OCI-LY7 (cell line): ENCODE measurements at regions of chr13 and their contacts with region 1.

Region 1: GRCh38 chr13:74133657-74134201 is 475 bp downstream of the KLF12 start:
- DNase-seq: peak; percentile 95
- H3K4me3 ChIP-seq: peak overlapping the region; percentile 86
- H3K27ac ChIP-seq: peak overlapping the region; percentile 90
- H3K4me1 ChIP-seq: peaks cover 38% of the 10 kb centered on the region
- CTCF ChIP-seq: 0 out of 2 replicates have a peak, but pooled peaks have one; percentile 14

Region 2: DNA sequence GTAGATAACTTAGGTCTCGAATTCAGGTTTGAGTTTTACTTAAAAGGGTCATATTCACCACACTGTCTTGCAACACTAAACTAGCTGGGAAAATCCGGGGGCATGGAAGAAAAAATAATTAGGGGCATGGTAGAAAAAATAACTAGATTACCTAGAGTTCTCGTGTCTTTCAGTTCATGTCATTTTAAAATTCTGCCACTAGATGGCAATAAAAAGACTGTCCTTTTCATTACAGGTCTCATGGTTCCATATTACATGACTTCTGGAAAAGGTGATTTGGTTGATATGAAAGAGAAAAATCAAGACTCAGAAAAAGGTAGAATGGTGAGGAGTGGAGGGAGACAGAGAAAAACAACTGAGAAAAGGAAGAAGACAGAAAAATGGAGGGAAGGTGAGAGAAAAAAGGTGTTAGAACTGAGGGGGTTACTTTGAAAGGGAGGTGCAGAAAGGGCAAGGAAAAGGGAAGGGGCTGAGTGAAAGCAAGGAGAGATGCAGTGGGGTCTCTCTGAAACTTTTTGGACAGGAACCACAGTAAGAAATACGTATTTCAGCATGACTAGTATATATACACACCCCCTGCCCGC is 298.5 kb before region 1 on chr13:
- CTCF ChIA-PET with region 1: no interaction called
- POLR2A ChIA-PET with region 1: no interaction called
- intact Hi-C with region 1: loop called (anchors 1 kb)
- DNase-seq: peak; percentile 73
- H3K4me3 ChIP-seq: no peak overlapping the region
- H3K27ac ChIP-seq: no peak overlapping the region
- H3K4me1 ChIP-seq: peaks cover 14% of the 10 kb centered on the region
- CTCF ChIP-seq: peak; percentile 88

Region 3: DNA sequence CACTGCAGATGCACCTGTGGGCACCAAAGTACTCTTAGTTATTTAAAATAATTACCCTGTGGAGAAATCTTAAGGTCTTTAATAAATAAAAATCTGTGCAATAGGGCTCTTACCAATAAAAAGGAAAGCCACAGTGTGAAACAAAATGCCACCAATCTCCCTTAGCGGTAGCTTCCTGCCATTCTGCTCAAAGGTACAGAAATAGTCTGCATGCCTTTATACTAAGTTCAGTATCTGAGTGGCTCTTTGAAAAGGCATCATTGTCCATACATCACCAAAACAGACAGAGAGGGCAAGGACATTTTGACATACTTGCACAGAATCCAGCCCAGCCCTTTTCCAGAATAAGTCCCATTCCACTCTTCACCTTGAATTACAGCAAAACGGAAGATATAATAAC is 160.6 kb before region 1 on chr13:
- CTCF ChIA-PET with region 1: no interaction called
- POLR2A ChIA-PET with region 1: interaction called, 21 read pairs
- intact Hi-C with region 1: loop called (anchors 1 kb)
- DNase-seq: peak; percentile 73
- H3K4me3 ChIP-seq: peak overlapping the region; percentile 68
- H3K27ac ChIP-seq: peak overlapping the region; percentile 99
- H3K4me1 ChIP-seq: peaks cover 96% of the 10 kb centered on the region
- CTCF ChIP-seq: no peak

Region 4: GRCh38 chr13:74026753-74027152 is 107.0 kb before region 1 on chr13:
- CTCF ChIA-PET with region 1: no interaction called
- POLR2A ChIA-PET with region 1: interaction called, 7 read pairs
- intact Hi-C with region 1: loop called (anchors 1 kb)
- DNase-seq: peak; percentile 82
- H3K4me3 ChIP-seq: peak overlapping the region; percentile 56
- H3K27ac ChIP-seq: peak overlapping the region; percentile 83
- H3K4me1 ChIP-seq: peaks cover 48% of the 10 kb centered on the region
- CTCF ChIP-seq: no peak